ENCODE measurements at regions of chr3 and their contacts with region 1.

Region 1: GRCh38 chr3:170869645-170870593 is at the start of gene RPL22L1:
- DNase-seq: peak; percentile 98
- ATAC-seq: peak; percentile 89
- H3K4me3 ChIP-seq: peak within 1 kb of the TSS; percentile 67 to 98 (median 92)
- H3K4me3 Mint-ChIP-seq: peak within 1 kb of the TSS; percentile 95
- H3K27ac ChIP-seq: peak within 1 kb of the TSS; percentile 93 to 98
- H3K27ac Mint-ChIP-seq: peak within 1 kb of the TSS; percentile 97
- H3K4me1 ChIP-seq: peaks cover 32 to 36% of the 10 kb centered on the region in 2 donors
- H3K4me1 Mint-ChIP-seq: peaks cover 30% of the 10 kb centered on the region
- H3K27me3 ChIP-seq: no peaks in the 10 kb centered on the region
- H3K27me3 Mint-ChIP-seq: no peaks in the 10 kb centered on the region
- CTCF ChIP-seq: no peak
- total RNA-seq, gene RPL22L1: 43.3 and 46.1 TPM in 2 replicates

Region 2: DNA sequence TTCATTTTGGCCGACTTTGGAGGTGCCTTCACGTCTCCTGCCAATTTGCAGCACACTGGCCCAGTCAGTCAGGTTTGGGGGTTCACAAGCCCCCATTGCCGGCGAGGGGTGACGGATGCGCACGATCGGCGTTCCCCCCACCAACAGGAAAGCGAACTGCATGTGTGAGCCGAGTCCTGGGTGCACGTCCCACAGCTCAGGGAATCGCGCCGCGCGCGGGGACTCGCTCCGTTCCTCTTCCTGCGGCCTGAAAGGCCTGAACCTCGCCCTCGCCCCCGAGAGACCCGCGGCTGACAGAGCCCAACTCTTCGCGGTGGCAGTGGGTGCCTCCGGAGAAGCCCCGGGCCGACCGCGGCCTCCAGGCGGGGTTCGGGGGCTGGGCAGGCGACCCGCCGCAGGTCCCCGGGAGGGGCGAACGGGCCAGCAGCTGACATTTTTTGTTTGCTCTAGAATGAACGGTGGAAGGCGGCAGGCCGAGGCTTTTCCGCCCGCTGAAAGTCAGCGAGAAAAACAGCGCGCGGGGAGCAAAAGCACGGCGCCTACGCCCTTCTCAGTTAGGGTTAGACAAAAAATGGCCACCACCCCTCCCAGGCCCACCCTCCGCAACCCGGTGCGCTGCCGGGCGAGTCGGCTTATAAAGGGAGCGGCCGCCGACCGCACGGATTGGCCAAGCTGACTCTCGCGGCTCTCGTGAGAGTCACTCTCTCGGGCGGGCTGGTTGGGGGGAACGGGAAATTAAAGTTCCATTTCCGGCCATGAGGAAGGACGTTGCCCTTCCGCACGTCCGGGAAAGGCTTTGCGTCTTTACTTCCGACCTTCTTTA is 1105.3 kb before region 1 on chr3 and contains the start of gene TERC:
- CTCF ChIA-PET with region 1: no interaction called
- POLR2A ChIA-PET with region 1: interaction called, 3 read pairs
- intact Hi-C with region 1: loop called (anchors 2 kb)
- DNase-seq: peak; percentile 95
- ATAC-seq: peak; percentile 82
- H3K4me3 ChIP-seq: peak within 1 kb of the TSS; percentile 70 to 100 (median 87)
- H3K4me3 Mint-ChIP-seq: peak within 1 kb of the TSS; percentile 100
- H3K27ac ChIP-seq: peak within 1 kb of the TSS; percentile 95 to 98
- H3K27ac Mint-ChIP-seq: peak within 1 kb of the TSS; percentile 100
- H3K4me1 ChIP-seq: peaks cover 11 to 17% of the 10 kb centered on the region in 2 donors
- H3K4me1 Mint-ChIP-seq: peaks cover 24% of the 10 kb centered on the region
- H3K27me3 ChIP-seq: no peaks in the 10 kb centered on the region
- H3K27me3 Mint-ChIP-seq: no peaks in the 10 kb centered on the region
- CTCF ChIP-seq: no peak
- total RNA-seq, gene TERC: 10.6 and 12.5 TPM in 2 replicates

Region 3: GRCh38 chr3:170811928-170812591 is 57.9 kb before region 1 on chr3:
- CTCF ChIA-PET with region 1: interaction called, 11 read pairs
- POLR2A ChIA-PET with region 1: no interaction called
- intact Hi-C with region 1: no loop called
- DNase-seq: peak; percentile 80
- ATAC-seq: peak; percentile 81
- H3K4me3 ChIP-seq: no peak overlapping the region
- H3K4me3 Mint-ChIP-seq: no peak overlapping the region
- H3K27ac ChIP-seq: no peak overlapping the region
- H3K27ac Mint-ChIP-seq: no peak overlapping the region
- H3K4me1 ChIP-seq: no peaks in the 10 kb centered on the region
- H3K4me1 Mint-ChIP-seq: no peaks in the 10 kb centered on the region
- H3K27me3 ChIP-seq: no peaks in the 10 kb centered on the region
- H3K27me3 Mint-ChIP-seq: peaks cover 8% of the 10 kb centered on the region
- CTCF ChIP-seq: peak; percentile 87

Region 4: DNA sequence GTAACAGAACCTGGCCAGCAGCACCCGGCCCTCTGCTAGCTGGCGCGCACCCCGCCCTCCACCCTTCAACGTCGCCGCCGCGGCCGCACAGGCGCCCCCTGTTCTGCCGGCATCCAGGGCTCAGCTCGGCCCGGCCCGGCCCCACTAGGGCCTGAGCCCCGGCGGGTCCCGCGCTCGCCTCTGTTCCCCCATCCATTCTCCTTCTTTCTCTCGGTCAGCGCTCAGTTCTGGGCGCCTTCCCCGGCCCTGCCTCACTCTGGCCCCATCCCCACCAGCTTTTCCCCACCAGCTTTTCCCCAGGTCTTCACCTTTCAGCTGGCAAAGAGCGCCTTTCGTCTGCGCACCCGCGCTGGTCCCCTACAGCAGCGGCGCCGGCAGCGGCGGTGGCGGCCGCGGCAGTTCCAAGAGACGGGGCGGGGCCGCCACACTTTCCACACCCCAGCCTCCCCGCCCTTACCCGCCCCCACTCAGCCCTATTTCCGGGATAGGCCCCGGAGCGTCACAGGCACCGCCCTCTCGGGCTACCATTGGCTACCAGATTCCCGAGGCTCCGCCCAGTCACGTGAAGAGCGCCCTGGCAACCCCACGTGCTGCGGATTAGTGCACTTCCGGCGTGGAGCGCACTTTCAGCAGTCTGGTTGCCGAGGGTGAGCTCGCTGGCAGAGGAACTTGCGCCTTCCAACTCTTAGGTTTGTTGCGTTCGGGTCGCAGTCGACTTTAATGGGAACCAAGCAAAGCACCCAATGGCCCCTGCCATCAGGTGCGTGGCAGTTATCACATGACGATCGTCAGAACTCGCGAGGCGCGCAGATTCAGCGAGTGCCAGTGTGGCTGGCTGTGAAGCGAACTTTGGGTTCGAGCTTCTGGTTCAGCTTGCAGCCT is 38.6 kb after region 1 on chr3 and contains the start of gene EIF5A2:
- CTCF ChIA-PET with region 1: no interaction called
- POLR2A ChIA-PET with region 1: interaction called, 5 read pairs
- intact Hi-C with region 1: loop called (anchors 1 kb)
- DNase-seq: peak; percentile 93
- ATAC-seq: peak; percentile 94
- H3K4me3 ChIP-seq: peak within 1 kb of the TSS; percentile 58 to 79 (median 67)
- H3K4me3 Mint-ChIP-seq: peak within 1 kb of the TSS; percentile 96
- H3K27ac ChIP-seq: peak within 1 kb of the TSS; percentile 7 to 68
- H3K27ac Mint-ChIP-seq: peak within 1 kb of the TSS; percentile 86
- H3K4me1 ChIP-seq: peaks cover 13 to 16% of the 10 kb centered on the region in 2 donors
- H3K4me1 Mint-ChIP-seq: peaks cover 22% of the 10 kb centered on the region
- H3K27me3 ChIP-seq: no peaks in the 10 kb centered on the region
- H3K27me3 Mint-ChIP-seq: no peaks in the 10 kb centered on the region
- CTCF ChIP-seq: no peak
- total RNA-seq, gene EIF5A2: 4.1 and 6.3 TPM in 2 replicates